AG04450 (cell line): ENCODE measurements at regions of chr2 and their contacts with region 1.

Region 1: GRCh38 chr2:69559442-69560146 is 83.9 kb downstream of the AAK1 start:
- DNase-seq: no peak
- H3K4me3 ChIP-seq: no peak overlapping the region
- H3K27ac ChIP-seq: no peak overlapping the region
- H3K27me3 ChIP-seq: no peaks in the 10 kb centered on the region
- CTCF ChIP-seq: peak; percentile 62

Region 2: DNA sequence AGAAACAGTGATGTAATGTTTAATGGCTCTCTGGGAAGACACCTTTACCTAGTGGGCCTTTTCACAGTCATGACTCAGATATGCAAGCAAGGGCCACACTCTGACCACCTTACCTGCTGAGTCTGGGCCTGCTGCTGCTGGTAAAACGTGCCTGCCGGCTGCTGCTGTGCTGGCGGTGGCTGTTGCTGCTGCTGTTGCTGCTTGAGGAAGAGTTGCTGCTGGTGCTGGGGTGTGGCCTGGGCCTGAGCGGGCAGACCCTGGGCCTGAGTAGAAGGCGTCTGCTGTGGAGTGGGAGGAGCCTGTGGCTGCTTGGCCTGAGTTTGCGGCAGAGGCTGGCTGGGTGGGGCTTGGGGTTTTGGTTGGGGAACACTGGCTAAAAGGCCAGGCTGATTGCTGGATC is 40.8 kb before region 1 on chr2:
- CTCF ChIA-PET with region 1: no interaction called
- POLR2A ChIA-PET with region 1: no interaction called
- DNase-seq: no peak
- H3K4me3 ChIP-seq: no peak overlapping the region
- H3K27ac ChIP-seq: no peak overlapping the region
- H3K27me3 ChIP-seq: no peaks in the 10 kb centered on the region
- CTCF ChIP-seq: no peak

Region 3: GRCh38 chr2:69716555-69717114 is 157.0 kb after region 1 on chr2:
- CTCF ChIA-PET with region 1: interaction called, 19 read pairs
- POLR2A ChIA-PET with region 1: no interaction called
- DNase-seq: no peak
- H3K4me3 ChIP-seq: no peak overlapping the region
- H3K27ac ChIP-seq: no peak overlapping the region
- H3K27me3 ChIP-seq: no peaks in the 10 kb centered on the region
- CTCF ChIP-seq: peak; percentile 13; the same call in 1 of the 2 replicates